Activated CD4-positive, alpha-beta T cell treated with anti-CD3 and anti-CD28 coated beads for 36 hours (primary cell): ENCODE measurements at regions of chr1 and their contacts with region 1.

Region 1: DNA sequence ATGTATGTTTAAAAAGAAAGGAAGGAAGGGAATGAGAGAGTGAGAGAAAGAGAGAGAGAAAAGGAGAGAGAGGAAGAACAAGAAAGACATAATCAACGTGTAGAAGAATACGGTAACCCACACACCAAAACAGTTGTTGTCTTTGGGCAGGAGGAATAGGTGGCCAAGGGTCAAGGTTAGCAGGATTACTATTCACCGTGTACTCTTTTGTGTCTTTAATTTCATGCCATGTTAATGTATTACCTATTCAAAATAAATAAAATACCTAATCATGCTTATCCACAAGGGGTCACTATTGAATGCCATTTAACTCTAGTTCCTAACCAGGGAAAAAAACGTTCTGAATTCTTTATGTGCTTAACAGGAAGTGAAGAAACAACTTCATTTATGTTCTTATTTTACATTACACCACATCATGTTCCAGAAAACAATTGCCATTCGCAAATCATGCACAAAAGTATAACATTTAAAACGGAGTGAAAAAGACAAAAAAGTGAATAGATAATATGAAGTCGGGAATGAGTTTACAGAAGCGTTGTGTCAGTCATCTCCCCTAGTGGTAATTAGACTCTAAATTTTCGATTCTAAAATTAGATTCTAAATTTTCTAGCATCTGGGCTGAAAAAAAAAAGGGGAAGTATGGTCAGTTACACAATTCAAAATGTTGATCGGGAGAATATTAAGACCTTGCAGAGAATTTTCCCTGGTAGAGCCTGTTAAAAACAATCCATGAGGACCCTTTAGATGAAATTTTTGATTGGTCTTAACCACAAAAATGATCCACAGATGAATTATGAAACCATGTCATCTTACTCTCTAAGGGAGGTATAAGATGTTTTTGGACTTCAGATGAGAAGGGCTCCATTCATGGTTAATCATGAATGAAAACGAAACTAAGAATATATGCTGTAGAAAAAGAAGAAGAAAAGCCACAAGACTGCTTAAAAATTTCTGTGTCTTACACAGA is 700 bp upstream of the KMO start:
- DNase-seq: no peak
- ATAC-seq: peak; percentile 77
- H3K4me3 Mint-ChIP-seq: peak overlapping the region; percentile 84
- H3K27ac Mint-ChIP-seq: peak overlapping the region; percentile 98
- H3K4me1 Mint-ChIP-seq: peaks cover 30% of the 10 kb centered on the region
- H3K27me3 Mint-ChIP-seq: peaks cover 3% of the 10 kb centered on the region

Region 2: GRCh38 chr1:241022366-241022765 is 509.1 kb before region 1 on chr1:
- CTCF ChIA-PET with region 1: no interaction called
- POLR2A ChIA-PET with region 1: no interaction called
- intact Hi-C with region 1: no loop called
- DNase-seq: no peak
- ATAC-seq: no peak
- H3K4me3 Mint-ChIP-seq: no peak overlapping the region
- H3K27ac Mint-ChIP-seq: no peak overlapping the region
- H3K4me1 Mint-ChIP-seq: no peaks in the 10 kb centered on the region
- H3K27me3 Mint-ChIP-seq: no peaks in the 10 kb centered on the region

Region 3: GRCh38 chr1:241519308-241520079 is 12.0 kb before region 1 on chr1 and contains the start of gene FH:
- CTCF ChIA-PET with region 1: interaction called, 3 read pairs
- POLR2A ChIA-PET with region 1: no interaction called
- intact Hi-C with region 1: loop called (anchors 1 kb)
- DNase-seq: peak; percentile 96
- ATAC-seq: peak; percentile 98
- H3K4me3 Mint-ChIP-seq: peak within 1 kb of the TSS; percentile 86
- H3K27ac Mint-ChIP-seq: peak within 1 kb of the TSS; percentile 87
- H3K4me1 Mint-ChIP-seq: peaks cover 21% of the 10 kb centered on the region
- H3K27me3 Mint-ChIP-seq: peaks cover 23% of the 10 kb centered on the region
- total RNA-seq, gene FH: 80.2 to 94.3 TPM

Region 4: DNA sequence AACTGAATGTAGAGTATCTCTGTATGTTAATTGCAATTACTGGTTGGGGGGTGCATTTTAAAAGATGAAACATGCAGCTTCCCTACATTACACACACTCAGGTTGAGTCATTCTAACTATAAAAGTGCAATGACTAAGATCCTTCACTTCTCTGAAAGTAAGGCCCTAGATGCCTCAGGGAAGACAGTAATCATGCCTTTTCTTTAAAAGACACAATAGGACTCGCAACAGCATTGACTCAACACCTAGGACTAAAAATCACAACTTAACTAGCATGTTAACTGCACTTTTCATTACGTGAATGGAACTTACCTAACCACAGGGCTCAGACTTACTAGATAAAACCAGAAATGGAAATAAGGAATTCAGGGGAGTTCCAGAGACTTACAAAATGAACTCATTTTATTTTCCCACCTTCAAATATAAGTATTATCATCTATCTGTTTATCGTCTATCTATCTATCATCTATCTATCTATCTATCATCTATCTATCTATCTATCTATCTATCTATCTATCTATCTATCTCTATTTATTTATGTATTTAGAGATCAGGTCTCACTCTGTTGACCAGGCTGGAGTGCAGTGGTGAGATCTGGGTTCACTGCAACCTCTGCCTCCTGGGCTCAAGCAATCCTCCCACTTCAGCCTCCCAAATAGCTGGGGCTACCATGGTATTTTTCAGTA is 60.9 kb after region 1 on chr1:
- CTCF ChIA-PET with region 1: interaction called, 3 read pairs
- POLR2A ChIA-PET with region 1: no interaction called
- intact Hi-C with region 1: loop called (anchors 1 kb)
- DNase-seq: no peak
- ATAC-seq: peak; percentile 99
- H3K4me3 Mint-ChIP-seq: no peak overlapping the region
- H3K27ac Mint-ChIP-seq: peak overlapping the region; percentile 85
- H3K4me1 Mint-ChIP-seq: peaks cover 34% of the 10 kb centered on the region
- H3K27me3 Mint-ChIP-seq: no peaks in the 10 kb centered on the region

Region 5: DNA sequence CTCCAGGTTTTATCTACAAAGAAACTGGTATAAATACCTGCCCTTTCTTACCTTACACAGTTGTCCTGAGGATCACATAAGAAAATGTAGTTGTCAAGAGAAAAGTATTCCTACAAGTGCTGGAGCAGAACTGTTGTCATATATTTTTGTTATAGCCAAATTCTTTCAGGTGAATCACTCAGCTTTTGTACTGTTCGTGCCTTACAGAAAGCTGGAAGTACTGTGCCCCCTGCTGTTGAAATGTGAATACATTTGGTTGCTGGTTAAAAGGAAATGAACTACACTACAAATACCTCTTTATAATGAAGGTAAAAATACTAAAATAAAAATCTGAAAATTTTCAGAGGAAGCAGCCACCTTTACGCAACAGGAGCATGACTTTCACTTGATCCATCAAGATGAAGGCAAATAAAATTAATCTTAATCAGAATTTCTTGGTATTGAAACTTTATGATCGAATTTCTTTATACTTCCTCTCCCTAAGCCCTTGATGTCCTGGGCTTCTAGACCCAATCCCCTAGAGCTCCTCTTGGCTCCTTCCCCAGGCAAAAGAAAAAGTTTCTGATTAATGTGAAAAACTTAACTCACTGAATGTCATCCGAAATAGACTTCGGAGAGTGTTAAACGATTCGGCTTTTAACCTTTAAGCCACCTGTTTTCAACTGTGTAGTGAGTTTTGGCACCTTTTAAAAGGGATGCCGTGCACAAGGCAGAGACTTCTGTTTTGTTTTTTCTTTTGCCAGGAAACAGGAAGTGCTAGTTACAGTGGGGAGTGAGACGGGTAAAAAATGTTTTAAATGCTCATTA is 96.2 kb after region 1 on chr1:
- CTCF ChIA-PET with region 1: interaction called, 17 read pairs
- POLR2A ChIA-PET with region 1: no interaction called
- intact Hi-C with region 1: loop called (anchors 1 kb)
- DNase-seq: peak; percentile 58
- ATAC-seq: peak; percentile 89
- H3K4me3 Mint-ChIP-seq: peak overlapping the region; percentile 1
- H3K27ac Mint-ChIP-seq: peak overlapping the region; percentile 44
- H3K4me1 Mint-ChIP-seq: peaks cover 22% of the 10 kb centered on the region
- H3K27me3 Mint-ChIP-seq: no peaks in the 10 kb centered on the region

Region 6: GRCh38 chr1:241716915-241717656 is 185.6 kb after region 1 on chr1:
- CTCF ChIA-PET with region 1: no interaction called
- POLR2A ChIA-PET with region 1: no interaction called
- intact Hi-C with region 1: loop called in 1 of 2 experiments (anchors 5 kb)
- DNase-seq: peak; percentile 46
- ATAC-seq: peak; percentile 94
- H3K4me3 Mint-ChIP-seq: no peak overlapping the region
- H3K27ac Mint-ChIP-seq: no peak overlapping the region
- H3K4me1 Mint-ChIP-seq: peaks cover 19% of the 10 kb centered on the region
- H3K27me3 Mint-ChIP-seq: peaks cover 11% of the 10 kb centered on the region

Region 7: DNA sequence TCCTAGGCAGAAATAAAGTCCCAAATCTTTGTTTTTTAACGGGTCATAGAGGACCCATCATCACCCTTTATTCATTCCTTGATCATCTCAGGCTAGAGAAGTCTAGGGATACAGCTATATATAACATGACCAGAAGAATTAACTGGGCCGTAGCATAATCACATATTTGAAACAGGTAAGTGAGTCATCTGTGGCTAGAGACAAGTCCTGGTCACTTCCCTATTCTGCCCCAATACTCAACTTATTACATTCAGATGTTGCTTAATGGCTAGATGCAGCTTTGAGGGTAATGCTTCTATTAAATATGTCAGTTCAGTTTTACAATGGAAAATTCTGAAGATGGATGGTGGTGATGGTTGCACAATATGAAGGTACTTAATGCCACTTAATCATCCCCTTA is 363.5 kb after region 1 on chr1:
- CTCF ChIA-PET with region 1: no interaction called
- POLR2A ChIA-PET with region 1: no interaction called
- intact Hi-C with region 1: no loop called
- DNase-seq: no peak
- ATAC-seq: no peak
- H3K4me3 Mint-ChIP-seq: no peak overlapping the region
- H3K27ac Mint-ChIP-seq: no peak overlapping the region
- H3K4me1 Mint-ChIP-seq: no peaks in the 10 kb centered on the region
- H3K27me3 Mint-ChIP-seq: no peaks in the 10 kb centered on the region

Region 8: DNA sequence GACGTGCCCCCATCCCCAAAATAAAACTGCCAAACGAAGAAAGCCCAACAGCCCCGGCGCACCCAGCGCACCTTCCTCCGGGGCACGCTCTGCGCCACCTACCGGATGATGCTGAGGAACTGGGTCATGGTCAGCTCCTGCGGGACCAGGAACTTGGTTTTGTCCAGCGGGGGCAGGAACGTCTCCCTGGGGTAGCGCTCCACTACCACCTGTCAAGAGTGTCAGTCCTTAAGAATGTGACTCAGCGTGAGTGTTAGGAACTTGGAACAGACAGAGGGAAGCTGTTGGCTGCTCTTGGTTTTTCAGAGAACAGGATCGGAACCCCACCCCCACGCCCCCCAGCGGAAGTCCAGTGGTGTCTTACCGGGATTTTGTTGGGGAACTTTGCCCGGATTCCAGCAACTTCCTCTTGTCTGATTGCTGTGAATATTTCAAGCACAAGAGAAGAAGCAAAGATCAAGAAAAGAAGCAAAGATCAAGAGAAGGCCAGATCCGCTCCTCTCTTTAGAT is 467.0 kb after region 1 on chr1:
- CTCF ChIA-PET with region 1: interaction called, 4 read pairs
- POLR2A ChIA-PET with region 1: no interaction called
- intact Hi-C with region 1: loop called (anchors 1 to 5 kb)
- DNase-seq: peak; percentile 74
- ATAC-seq: peak; percentile 78
- H3K4me3 Mint-ChIP-seq: peak overlapping the region; percentile 35
- H3K27ac Mint-ChIP-seq: no peak overlapping the region
- H3K4me1 Mint-ChIP-seq: peaks cover 4% of the 10 kb centered on the region
- H3K27me3 Mint-ChIP-seq: peaks cover 4% of the 10 kb centered on the region